ENCODE measurements at regions of chr9 and their contacts with region 1.

Region 1: GRCh38 chr9:73919712-73920111 is 577.4 kb upstream of the RORB start:
- DNase-seq: no peak
- ATAC-seq: no peak
- H3K4me3 ChIP-seq: no peak overlapping the region
- H3K27ac ChIP-seq: no peak overlapping the region
- H3K4me1 ChIP-seq: no peaks in the 10 kb centered on the region
- H3K27me3 ChIP-seq: no peaks in the 10 kb centered on the region
- CTCF ChIP-seq: no peak

Region 2: DNA sequence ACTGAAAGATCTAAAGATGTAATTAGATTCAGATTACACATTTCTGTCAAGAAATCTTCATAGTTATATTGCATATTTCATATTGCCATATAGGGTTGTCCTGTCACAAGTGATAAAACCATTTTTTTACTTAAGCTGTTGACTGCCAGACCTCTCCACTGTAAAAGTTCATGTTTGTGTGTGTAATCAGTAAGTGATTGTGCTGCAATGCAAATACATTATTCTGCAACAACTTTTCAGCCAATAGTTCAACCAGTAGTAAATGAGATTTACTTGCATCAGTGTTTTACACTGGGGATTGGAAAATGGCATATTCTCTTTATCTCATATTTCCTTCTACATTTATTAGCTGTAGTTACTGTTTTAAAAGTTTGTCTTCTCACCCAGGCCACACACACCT is 26.5 kb before region 1 on chr9:
- intact Hi-C with region 1: loop called in 1 of 10 experiments (anchors 2 kb)
- DNase-seq: no peak
- ATAC-seq: no peak
- H3K4me3 ChIP-seq: no peak overlapping the region
- H3K27ac ChIP-seq: no peak overlapping the region
- H3K4me1 ChIP-seq: no peaks in the 10 kb centered on the region
- H3K27me3 ChIP-seq: no peaks in the 10 kb centered on the region
- CTCF ChIP-seq: no peak

Measured in heart right ventricle (tissue), 16 donors.